PC-9 (cell line): ENCODE measurements at regions of chr9 and their contacts with region 1.

Region 1: DNA sequence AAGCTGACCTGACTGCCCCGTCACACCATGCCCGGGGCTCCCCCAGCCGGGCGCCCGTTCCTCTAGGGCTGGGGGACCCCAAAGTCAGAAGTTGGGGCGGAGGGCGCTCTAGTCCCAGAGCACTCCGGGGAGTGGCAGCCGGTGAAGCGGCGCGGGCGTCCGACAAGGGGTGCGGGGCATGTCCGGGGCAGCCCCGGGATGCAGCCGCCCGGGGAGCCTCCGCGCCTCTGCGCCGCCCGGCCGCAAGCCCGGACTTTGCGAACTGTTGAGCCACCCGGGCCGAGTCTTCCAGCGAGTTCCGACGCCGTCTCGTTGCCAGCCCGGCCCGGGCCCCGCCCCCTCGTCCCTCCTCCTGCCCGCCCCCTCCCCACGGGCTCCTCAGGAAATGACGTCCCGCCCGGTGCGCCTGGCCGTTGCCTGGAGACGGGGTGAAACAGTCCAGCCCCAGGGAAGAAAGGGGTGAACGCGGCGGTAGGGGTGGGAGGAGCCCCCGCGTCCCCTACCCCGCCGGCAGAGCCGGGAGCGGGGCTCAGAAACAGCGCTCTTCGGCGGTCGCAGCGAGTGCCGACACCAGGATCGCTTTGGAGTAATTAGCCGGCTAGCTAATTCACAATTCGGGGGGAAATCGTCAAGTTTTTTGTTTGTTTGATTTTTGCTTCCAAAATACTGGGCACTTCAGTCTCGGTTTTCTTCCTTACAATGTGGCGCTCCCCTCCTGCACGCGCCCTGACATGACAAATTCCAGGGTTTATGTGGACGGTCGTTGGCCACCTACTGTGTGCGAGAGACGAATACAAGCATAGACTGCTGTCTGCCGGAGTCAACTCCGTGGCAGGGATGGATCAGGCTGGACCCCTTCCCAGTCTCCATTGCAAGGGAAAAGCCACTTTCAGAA is at the start of gene WHRN:
- DNase-seq: peak; percentile 79 to 96
- H3K4me3 ChIP-seq: peak within 1 kb of the TSS; percentile 82
- H3K27ac ChIP-seq: no peak within 1 kb of the TSS
- H3K4me1 ChIP-seq: peaks cover 35% of the 10 kb centered on the region
- H3K27me3 ChIP-seq: peaks cover 9% of the 10 kb centered on the region; the same call in 1 of the 2 replicates
- CTCF ChIP-seq: no peak
- total RNA-seq, gene WHRN: 19.8 and 21.9 TPM in 2 replicates

Region 2: DNA sequence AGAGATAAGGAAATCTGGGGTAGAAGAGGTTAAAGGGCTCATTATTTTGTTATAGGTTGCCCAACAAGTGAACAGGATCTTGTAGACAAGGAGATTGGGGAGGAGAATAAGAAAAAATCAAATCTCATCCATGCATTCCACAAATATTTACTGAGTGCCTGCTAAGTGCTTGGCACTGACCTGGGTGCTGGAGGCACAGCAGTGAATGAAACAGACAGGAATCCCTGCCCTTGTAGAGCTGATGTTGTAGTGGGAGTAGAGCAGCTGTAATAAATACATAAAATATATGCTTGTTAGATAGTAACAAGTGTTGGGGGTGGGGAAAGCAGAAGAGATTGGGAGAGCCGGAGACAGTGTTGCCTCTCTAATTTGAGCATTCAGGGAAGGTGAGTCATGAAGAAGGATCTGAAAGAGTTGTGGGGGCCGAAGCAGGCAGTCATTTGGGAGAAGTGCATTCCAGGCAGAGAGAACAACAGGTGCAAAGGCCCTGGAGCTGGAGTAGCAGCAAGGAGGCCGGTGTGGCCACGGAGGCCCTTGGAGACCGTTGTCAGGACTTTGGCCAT is 531.5 kb before region 1 on chr9:
- CTCF ChIA-PET with region 1: no interaction called
- POLR2A ChIA-PET with region 1: no interaction called
- intact Hi-C with region 1: no loop called
- DNase-seq: no peak
- H3K4me3 ChIP-seq: no peak overlapping the region
- H3K27ac ChIP-seq: no peak overlapping the region
- H3K4me1 ChIP-seq: no peaks in the 10 kb centered on the region
- H3K27me3 ChIP-seq: peaks cover 62% of the 10 kb centered on the region
- CTCF ChIP-seq: no peak

Region 3: GRCh38 chr9:114434878-114435311 is 70.5 kb before region 1 on chr9:
- CTCF ChIA-PET with region 1: no interaction called
- POLR2A ChIA-PET with region 1: no interaction called
- intact Hi-C with region 1: loop called (anchors 1 kb)
- DNase-seq: peak; percentile 40 to 43
- H3K4me3 ChIP-seq: no peak overlapping the region
- H3K27ac ChIP-seq: no peak overlapping the region
- H3K4me1 ChIP-seq: no peaks in the 10 kb centered on the region
- H3K27me3 ChIP-seq: no peaks in the 10 kb centered on the region
- CTCF ChIP-seq: peak; percentile 80

Region 4: GRCh38 chr9:114587385-114588202 is 82.2 kb after region 1 on chr9 and contains the start of gene ATP6V1G1:
- CTCF ChIA-PET with region 1: interaction called, 3 read pairs
- POLR2A ChIA-PET with region 1: interaction called, 5 read pairs
- intact Hi-C with region 1: loop called (anchors 1 kb)
- DNase-seq: peak; percentile 97 to 99
- H3K4me3 ChIP-seq: peak within 1 kb of the TSS; percentile 78
- H3K27ac ChIP-seq: peak within 1 kb of the TSS; percentile 82
- H3K4me1 ChIP-seq: peaks cover 20% of the 10 kb centered on the region
- H3K27me3 ChIP-seq: no peaks in the 10 kb centered on the region
- CTCF ChIP-seq: no peak
- total RNA-seq, gene ATP6V1G1: 81.9 and 90.6 TPM in 2 replicates